MCF 10A (cell line): ENCODE measurements at regions of chr19 and their contacts with region 1.

Region 1: GRCh38 chr19:34974646-34975045 is 10.6 kb upstream of the ZNF792 start:
- DNase-seq: peak; percentile 32
- H3K4me3 Mint-ChIP-seq: no peak overlapping the region
- H3K27ac Mint-ChIP-seq: no peak overlapping the region
- H3K4me1 Mint-ChIP-seq: peaks cover 5% of the 10 kb centered on the region
- H3K27me3 Mint-ChIP-seq: peaks cover 10% of the 10 kb centered on the region
- CTCF ChIP-seq: no peak

Region 2: DNA sequence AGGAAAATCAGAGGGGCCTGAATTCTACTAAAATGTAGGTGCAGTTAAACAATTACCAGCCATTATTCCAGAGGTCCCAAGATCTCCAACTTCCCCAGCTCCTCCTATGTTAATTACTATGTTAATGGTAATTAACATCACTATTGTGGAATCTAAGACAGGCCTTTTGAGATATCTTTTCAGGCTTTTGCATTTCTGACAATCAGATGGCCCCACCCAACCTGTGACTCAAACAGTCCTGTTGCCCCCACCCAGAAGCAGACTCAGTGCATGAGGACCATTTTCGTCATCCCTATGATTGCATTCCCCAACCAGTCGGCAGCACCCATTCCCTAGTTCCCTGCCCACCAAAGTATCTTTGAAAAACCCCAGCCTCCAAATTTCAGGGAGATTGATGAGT is 56.5 kb before region 1 on chr19:
- CTCF ChIA-PET with region 1: no interaction called
- POLR2A ChIA-PET with region 1: no interaction called
- intact Hi-C with region 1: no loop called
- DNase-seq: no peak
- H3K4me3 Mint-ChIP-seq: no peak overlapping the region
- H3K27ac Mint-ChIP-seq: no peak overlapping the region
- H3K4me1 Mint-ChIP-seq: no peaks in the 10 kb centered on the region
- H3K27me3 Mint-ChIP-seq: no peaks in the 10 kb centered on the region
- CTCF ChIP-seq: no peak

Region 3: DNA sequence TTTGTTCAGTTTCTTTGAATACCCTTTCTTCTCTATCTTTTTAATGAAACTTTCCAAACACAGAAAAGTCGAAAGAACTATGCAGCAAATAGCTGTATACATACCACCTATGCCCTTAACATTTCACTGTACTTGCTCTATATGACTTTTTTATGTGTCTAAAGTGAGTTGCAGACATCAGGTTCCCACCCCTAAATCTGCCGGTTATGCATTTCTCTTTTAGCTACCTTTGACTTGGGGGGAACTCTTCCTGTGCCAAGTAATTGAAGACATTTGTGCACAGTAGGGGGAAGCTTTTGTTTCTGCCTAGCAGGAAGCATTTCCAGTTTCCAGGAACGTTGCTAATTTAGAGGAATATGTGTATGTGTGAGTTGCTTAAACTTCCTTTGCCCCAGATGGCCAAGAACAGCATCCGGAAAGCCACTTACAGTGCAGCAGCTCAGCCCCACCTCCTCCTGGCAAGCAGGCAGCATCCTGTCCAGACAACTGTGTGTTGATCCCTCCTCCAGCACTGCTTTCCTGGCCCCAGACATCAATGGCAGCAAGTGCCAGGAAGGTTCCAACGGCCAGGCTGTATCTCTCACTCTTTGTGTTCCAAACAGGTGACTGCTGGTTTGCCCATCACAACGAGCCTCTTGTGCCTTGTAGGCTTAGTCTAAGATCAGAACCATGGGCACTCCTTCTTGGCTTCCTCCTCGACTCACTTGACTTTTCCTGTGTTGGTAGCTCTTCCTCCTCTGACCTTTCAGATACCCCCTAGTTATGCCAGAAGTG is 10.8 kb after region 1 on chr19:
- CTCF ChIA-PET with region 1: interaction called, 10 read pairs
- POLR2A ChIA-PET with region 1: no interaction called
- intact Hi-C with region 1: no loop called
- DNase-seq: no peak
- H3K4me3 Mint-ChIP-seq: no peak overlapping the region
- H3K27ac Mint-ChIP-seq: no peak overlapping the region
- H3K4me1 Mint-ChIP-seq: no peaks in the 10 kb centered on the region
- H3K27me3 Mint-ChIP-seq: peaks cover 9% of the 10 kb centered on the region
- CTCF ChIP-seq: no peak

Region 4: DNA sequence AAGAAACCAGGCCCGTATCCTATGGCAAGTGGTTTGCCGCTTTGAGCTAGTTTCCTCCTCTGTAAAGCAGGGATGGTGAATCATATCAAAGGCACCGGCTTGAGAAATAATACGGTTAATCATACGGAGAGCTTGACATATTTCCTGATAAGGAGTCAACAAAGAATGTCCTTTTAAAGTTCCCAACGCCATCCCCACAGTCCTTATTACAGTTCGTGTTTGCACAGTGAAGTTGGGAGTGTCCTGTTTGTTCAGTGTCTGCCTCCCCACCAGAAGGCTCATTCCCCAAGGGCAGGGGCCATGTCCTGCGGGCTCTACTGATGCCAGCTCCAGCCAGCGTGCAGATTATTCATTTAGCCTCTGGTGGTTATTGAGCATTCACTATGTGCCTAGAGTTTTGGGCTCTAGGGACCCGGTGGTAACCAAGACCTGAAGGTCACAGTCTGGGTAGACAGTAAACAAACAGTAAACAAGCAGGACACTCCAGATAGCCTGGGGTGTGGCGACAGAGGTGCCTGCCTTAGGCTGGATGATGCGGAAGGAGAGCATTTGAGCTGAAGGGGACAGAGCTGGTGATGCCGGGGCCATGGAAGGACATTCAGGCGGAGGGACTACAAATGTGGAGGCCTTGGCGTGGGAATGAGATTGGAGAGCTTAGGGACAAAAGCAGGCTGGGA is 31.8 kb after region 1 on chr19:
- CTCF ChIA-PET with region 1: interaction called, 45 read pairs
- POLR2A ChIA-PET with region 1: no interaction called
- intact Hi-C with region 1: loop called (anchors 1 kb)
- DNase-seq: peak; percentile 30
- H3K4me3 Mint-ChIP-seq: no peak overlapping the region
- H3K27ac Mint-ChIP-seq: no peak overlapping the region
- H3K4me1 Mint-ChIP-seq: peaks cover 20% of the 10 kb centered on the region
- H3K27me3 Mint-ChIP-seq: no peaks in the 10 kb centered on the region
- CTCF ChIP-seq: no peak

Region 5: DNA sequence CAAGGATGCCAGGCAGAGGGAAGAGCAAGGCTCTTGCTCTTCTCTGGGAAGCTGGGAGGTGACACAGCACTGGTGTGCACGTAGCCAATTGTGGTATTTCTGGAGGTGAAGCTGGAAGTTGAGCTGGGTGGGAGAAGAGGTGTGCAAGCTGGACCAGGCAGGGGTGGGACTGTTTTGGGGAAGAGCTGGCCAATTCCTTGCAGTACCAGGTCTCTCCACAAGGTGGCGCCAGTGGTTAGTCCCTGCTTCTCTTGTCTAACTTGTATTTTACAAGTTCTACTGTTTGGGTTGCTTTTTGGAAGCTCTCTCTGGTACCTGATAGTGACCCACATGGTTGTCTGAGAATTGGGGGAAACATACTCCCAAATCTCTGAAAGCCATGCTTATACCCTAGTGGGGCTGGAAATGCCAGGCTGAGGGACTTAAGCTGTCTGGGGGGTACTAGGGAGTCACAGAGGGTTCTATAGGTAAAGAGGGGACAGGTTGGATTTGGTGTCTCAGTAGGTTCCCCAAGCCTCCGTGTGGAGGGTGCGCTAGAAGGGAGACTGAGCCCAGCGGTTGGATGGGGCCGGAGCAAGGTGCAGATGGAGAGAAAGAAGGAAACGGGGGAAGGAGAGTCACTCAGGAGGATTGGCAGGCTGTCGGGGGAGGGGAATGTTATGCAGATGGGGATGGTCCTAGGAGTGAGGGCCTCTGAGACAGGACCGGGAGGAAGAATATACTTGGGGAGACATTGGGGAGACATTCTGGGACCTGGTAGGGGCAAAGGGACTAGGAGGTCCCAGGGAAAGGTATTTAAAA is 69.9 kb after region 1 on chr19:
- CTCF ChIA-PET with region 1: interaction called, 12 read pairs
- POLR2A ChIA-PET with region 1: interaction called, 4 read pairs
- intact Hi-C with region 1: loop called (anchors 1 kb)
- DNase-seq: peak; percentile 77
- H3K4me3 Mint-ChIP-seq: no peak overlapping the region
- H3K27ac Mint-ChIP-seq: no peak overlapping the region
- H3K4me1 Mint-ChIP-seq: peaks cover 6% of the 10 kb centered on the region
- H3K27me3 Mint-ChIP-seq: no peaks in the 10 kb centered on the region
- CTCF ChIP-seq: peak; percentile 94

Region 6: DNA sequence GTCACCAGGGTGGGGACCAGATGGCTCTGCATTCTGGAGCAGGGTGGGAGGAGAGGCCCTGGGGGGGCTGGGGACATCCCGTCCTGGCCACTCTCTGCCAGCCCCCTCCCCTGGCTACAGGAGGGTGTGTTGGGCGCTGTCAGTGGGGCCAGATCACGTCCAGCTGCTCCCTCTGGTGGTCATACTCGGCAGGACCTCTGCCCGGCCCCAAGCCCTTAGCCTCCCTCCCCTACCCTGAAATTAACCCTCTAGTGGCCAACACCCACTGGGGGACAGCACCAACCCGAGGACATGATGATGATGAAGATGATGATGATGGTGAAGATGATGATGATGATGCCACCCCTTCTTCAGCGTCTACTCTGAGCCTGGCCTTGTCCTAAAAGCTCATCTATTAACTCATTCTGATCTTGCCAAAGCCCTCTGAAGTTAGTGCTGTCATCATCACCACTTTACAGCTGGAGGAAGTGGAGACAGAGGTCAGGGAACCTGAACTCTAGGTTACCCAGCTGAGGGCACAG is 160.8 kb after region 1 on chr19:
- CTCF ChIA-PET with region 1: interaction called, 7 read pairs
- POLR2A ChIA-PET with region 1: no interaction called
- intact Hi-C with region 1: loop called (anchors 1 kb)
- DNase-seq: peak; percentile 73
- H3K4me3 Mint-ChIP-seq: no peak overlapping the region
- H3K27ac Mint-ChIP-seq: no peak overlapping the region
- H3K4me1 Mint-ChIP-seq: peaks cover 6% of the 10 kb centered on the region
- H3K27me3 Mint-ChIP-seq: peaks cover 4% of the 10 kb centered on the region
- CTCF ChIP-seq: peak; percentile 79